Motor neuron (in vitro differentiated cells): ENCODE measurements at regions of chr9 and their contacts with region 1.

Region 1: DNA sequence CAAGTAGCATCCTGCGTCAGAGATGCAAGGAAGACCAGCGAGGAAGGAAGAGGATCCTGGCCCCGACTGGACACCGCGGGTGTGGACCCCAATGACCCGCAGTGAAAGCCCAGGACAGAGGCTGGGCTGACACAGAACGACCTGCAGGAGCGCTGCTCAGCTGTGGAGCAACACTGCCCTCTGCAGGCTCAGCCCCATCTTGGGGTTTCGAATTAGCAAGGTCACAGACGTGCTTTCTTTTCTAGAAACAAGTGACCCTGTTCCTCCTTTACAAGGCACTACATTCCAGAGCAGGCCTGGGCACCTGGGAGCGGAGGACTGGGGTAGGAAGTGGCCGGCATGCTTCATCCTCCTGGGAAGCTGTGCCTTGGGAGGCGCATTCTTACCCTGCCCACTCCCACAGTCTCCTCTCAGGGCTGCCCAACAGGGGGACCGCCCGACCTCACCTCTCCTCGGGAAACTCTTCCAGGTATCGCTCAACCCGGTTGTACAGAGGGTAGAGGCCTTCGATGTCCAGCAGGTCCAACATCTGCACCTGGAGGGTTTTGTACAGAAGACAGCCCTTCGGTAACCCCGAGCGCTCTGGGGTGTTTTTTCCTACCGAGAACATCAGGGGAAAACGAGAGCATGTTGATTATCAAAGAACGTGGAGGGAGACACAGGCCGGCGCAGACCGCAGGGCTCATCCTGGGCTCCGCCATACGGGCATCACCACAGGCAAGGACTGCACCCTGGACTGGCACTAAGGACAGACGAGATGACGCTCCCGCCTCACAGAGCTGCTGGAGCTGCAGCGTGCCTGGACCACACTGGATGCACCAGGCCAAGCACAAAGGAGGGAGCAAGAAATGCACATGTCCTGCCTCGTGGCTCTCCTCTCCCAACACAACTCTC is 35.0 kb downstream of the IPPK start:
- ATAC-seq: peak; percentile 80 to 94 (median 87)
- H3K4me3 ChIP-seq: no peak overlapping the region
- H3K27ac ChIP-seq: no peak overlapping the region
- H3K4me1 ChIP-seq: no peaks in the 10 kb centered on the region

Region 2: GRCh38 chr9:92133949-92134604 is 500.9 kb before region 1 on chr9:
- in situ Hi-C with region 1: loop called in 4 of 9 experiments (anchors 10 to 25 kb)
- ATAC-seq: peak; percentile 76 to 93 (median 84)
- H3K4me3 ChIP-seq: no peak overlapping the region
- H3K27ac ChIP-seq: no peak overlapping the region
- H3K4me1 ChIP-seq: peaks cover 2 to 8% of the 10 kb centered on the region in 2 donors

Region 3: GRCh38 chr9:92293452-92294296 is 341.3 kb before region 1 on chr9 and contains the start of gene IARS1:
- in situ Hi-C with region 1: loop called in 1 of 9 experiments (anchors 25 kb)
- ATAC-seq: peak; percentile 91 to 98 (median 96)
- H3K4me3 ChIP-seq: peak within 1 kb of the TSS; percentile 56 to 92 (median 88)
- H3K27ac ChIP-seq: peak within 1 kb of the TSS; percentile 96 to 98
- H3K4me1 ChIP-seq: peaks cover 17 to 19% of the 10 kb centered on the region in 2 donors
- total RNA-seq, gene IARS1: 127 to 240 (median 200) TPM

Region 4: DNA sequence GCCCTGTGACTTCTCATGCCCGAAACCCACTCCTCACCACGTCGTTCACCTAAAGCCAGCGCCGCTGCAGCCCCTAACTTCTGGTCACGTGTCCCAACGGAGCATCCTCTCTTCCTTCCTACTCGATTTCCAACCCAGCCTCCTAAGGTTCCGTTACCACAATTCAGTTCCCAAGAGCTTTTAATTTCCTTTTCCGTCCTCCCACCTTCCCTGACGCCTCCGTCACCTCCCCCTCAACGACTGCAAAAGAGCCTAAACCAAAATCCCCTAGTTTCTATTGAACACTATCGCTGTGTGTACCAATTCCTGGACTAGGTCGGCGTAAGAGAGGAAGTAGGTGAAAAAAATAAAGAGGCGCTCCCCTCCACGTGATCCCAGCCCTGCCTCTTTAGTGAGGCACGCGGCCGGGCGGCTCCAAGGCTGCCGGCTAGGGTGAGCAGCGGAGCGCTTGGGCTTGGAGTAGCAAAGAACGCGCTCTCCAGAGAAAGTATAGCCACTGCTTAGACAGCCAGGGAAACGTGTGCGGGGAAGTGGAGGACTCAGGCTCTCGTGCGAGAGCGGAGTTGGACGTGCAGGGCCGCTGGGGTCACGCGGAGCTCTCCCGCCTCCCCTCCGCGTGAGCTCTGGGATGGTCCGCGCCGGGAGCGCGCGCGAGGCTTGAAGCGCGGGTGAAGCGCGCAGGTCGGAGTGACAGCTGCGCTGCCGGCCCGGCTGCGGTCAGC is 309.5 kb before region 1 on chr9 and contains the starts of genes CENPP and NOL8:
- in situ Hi-C with region 1: loop called in 4 of 9 experiments (anchors 10 to 25 kb)
- ATAC-seq: peak; percentile 87 to 96 (median 95)
- H3K4me3 ChIP-seq: peak within 1 kb of the TSS; percentile 92 to 96 (median 94)
- H3K27ac ChIP-seq: peak within 1 kb of the TSS; percentile 98 to 100
- H3K4me1 ChIP-seq: peaks cover 6 to 7% of the 10 kb centered on the region in 2 donors
- total RNA-seq, gene CENPP: 1.7 to 22.3 (median 5.0) TPM
- total RNA-seq, gene NOL8: 17.2 to 77.0 (median 29.5) TPM

Region 5: DNA sequence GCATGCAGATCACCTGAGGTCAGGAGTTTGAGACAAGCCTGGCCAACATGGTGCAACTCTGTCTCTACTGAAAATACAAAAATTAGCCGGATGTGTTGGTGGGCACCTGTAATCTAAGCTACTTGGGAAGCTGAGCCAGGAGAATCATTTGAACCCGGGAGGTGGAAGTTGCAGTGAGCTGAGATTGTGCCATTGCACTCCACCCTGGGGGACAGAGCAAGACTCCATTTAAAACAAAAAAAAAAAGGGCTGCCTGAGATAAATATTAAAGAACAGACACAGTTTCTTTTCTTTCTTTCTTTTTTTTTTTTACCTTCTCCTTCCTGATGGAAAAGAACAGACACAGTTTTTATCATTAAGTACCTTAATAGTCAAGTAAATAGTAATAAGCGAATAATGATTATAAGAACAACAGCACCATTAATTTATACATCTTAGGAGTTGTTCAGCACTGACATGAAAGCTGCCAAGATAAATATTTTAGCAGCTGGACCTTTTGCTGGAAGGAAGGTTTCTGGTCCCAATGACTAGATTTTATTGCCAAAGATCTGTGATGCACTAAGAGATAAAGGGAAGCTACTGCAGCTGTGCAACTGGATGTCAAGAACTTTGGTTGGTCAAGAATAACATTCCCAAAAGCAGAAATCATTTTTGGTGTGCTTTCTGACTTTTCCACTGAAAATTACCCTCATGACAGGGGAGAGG is 302.2 kb before region 1 on chr9:
- in situ Hi-C with region 1: loop called in 2 of 9 experiments (anchors 10 to 25 kb)
- ATAC-seq: no peak
- H3K4me3 ChIP-seq: no peak overlapping the region
- H3K27ac ChIP-seq: no peak overlapping the region
- H3K4me1 ChIP-seq: no peaks in the 10 kb centered on the region

Region 6: DNA sequence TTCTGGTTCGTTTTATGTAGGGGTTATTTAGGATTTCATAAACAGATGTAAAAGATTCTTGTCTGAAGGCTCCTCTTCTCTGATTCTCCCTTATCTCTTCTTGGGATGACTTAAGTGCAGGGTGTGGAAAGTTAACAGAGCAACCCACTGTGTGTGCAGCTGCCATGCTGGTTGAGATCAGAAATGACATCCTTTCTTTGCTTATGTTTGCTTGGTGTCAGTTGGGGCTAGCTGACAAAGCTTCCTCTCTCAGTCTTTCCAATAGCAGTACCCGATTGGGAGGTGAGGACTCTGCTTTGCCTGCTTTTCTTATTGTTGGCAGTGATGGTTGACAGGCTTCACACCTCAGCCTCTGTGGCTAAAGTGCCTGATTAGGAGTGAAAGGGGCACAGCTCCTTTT is 257.1 kb before region 1 on chr9:
- in situ Hi-C with region 1: no loop called
- ATAC-seq: no peak
- H3K4me3 ChIP-seq: no peak overlapping the region
- H3K27ac ChIP-seq: no peak overlapping the region
- H3K4me1 ChIP-seq: peaks cover 0 to 4% of the 10 kb centered on the region in 2 donors